ENCODE measurements at regions of chrX and their contacts with region 1.

Region 1: DNA sequence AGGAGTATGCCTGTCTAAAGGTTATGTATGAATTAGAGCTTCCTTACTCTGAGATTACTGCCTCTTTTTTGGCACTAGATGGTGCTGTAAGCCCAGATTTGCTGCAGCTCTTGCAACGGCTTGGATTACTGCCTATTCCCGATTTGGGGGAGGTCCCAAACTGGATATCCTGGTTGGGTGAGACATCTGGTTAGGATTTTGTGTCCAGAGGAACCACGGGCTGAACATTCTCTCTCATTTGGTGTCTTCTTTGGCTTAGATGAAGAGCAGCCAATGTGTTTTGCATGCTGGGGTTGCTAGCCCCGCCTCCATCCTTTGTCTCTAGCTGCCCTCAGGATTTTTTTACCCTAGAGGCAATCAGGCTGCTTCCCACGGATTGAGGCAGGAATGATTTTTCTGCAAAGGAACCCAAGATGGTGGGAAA is 31.9 kb downstream of the F8A1 start:
- DNase-seq: peak; percentile 20
- H3K4me3 Mint-ChIP-seq: peak overlapping the region; percentile 25
- H3K27ac Mint-ChIP-seq: no peak overlapping the region
- H3K4me1 Mint-ChIP-seq: peaks cover 1% of the 10 kb centered on the region
- H3K27me3 Mint-ChIP-seq: peaks cover 14% of the 10 kb centered on the region

Region 2: DNA sequence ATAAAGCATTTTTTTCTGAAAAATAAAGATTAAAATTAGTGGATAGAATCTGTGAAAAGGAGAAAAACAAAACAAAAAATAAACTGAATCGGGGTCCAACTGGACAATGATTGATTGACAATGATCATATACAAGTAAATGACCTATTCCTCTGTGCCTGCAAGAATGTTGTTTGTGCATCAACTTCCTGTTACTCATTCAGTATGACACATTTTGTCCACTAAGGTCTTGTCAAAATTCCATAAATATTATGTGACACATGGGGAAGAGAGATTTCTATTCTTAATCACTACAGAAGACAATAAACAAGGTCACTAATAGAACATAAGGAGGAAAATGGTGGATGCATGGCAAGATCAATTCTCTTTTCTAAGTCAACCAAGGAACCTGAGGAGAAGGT is 49.5 kb after region 1 on chrX:
- CTCF ChIA-PET with region 1: no interaction called
- POLR2A ChIA-PET with region 1: no interaction called
- DNase-seq: no peak
- H3K4me3 Mint-ChIP-seq: no peak overlapping the region
- H3K27ac Mint-ChIP-seq: no peak overlapping the region
- H3K4me1 Mint-ChIP-seq: no peaks in the 10 kb centered on the region
- H3K27me3 Mint-ChIP-seq: peaks cover 4% of the 10 kb centered on the region

Region 3: DNA sequence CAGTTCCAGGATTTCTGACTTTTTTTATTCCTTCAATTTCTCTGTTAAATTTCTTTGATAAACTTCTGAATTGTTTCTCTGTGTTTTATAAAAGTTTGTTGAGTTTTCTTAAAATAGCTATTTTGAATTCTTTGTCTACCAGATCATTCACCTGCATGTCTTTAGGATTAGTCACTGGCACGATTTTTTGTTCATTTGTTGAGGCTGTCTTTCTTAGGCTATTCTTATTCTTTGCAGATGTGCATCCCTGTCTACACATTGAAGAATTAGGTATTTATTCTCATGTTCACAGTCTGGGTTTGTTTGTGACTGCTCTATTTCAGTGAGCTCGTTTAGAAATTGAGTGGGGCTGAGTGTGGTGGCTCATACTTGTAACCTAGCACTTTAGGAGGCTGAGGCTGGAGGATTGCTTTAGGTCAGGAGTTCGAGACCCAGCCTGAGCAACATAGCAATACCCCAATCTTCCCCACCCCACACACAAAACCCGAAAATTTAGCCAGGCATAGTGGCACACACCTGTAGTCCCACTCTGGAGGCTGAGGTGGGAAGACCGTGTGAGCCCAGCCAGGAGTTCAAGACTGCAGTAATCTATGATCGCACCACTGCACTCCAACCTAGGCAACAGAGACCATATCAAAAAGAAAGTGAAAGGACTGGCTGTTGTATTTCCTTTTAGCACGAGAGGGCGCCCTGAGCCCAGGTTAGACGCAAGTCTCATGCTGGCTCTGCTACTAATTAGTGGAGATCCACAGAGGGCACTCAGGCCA is 62.4 kb after region 1 on chrX:
- CTCF ChIA-PET with region 1: interaction called, 10 read pairs
- POLR2A ChIA-PET with region 1: no interaction called
- DNase-seq: peak; percentile 83
- H3K4me3 Mint-ChIP-seq: peak overlapping the region; percentile 72
- H3K27ac Mint-ChIP-seq: no peak overlapping the region
- H3K4me1 Mint-ChIP-seq: peaks cover 31% of the 10 kb centered on the region
- H3K27me3 Mint-ChIP-seq: no peaks in the 10 kb centered on the region